ENCODE measurements at regions of chr9 and their contacts with region 1.

Region 1: DNA sequence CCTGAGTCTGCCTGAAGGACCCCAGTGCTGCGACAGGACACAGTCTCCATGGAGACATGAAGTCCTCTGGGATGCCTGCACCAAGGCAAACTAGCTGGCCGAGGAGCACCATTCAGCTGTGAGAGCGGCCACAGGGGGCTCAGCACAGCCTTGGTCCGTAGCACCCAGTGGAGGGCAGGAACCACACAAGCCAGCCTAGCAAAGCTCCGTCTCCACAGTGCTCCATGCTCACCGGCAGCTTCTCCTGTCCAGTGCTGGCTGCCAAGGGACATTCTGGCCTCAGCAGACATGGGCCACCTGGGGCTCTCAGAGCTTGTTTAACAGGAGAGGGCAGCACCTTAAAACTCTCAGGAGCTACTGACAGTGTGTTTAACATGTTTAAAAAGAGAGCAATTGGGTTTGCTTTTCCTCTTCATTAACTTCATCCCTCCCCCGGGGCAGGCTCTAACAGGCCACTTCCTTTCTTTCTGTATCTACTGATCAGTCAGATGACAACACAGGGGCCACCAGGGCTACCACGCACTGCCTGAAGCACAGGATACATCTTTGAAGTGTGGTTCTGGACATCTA is 57.0 kb downstream of the SECISBP2 start:
- DNase-seq: no peak
- H3K27ac ChIP-seq: no peak overlapping the region
- CTCF ChIP-seq: no peak

Region 2: DNA sequence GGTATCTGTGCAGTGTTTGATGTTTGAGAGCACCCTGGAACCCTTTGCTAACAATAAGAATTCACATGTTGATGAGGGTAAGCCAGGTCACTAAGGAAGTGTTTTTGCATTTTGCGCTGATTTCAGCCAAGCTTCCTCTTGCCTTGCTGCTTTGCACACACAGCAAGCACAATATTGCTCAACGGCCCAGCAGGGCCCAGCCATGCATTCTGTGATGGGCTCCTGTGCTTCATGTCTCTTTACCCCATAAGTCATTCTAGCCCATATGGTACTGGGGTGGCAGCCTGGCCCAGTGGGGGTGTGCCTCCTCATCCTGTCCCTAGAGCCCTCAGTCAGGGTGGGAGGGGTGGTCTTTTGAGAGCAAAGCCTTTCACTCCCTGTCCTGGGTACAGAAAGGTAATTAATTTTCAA is 710.8 kb after region 1 on chr9:
- CTCF ChIA-PET with region 1: interaction called, 13 read pairs
- POLR2A ChIA-PET with region 1: no interaction called
- DNase-seq: no peak
- H3K27ac ChIP-seq: no peak overlapping the region
- CTCF ChIP-seq: no peak

Measured in RWPE1 (cell line).